Activated CD4-positive, alpha-beta memory T cell treated with anti-CD3 and anti-CD28 coated beads for 36 hours (primary cell): ENCODE measurements at regions of chr14 and their contacts with region 1.

Region 1: DNA sequence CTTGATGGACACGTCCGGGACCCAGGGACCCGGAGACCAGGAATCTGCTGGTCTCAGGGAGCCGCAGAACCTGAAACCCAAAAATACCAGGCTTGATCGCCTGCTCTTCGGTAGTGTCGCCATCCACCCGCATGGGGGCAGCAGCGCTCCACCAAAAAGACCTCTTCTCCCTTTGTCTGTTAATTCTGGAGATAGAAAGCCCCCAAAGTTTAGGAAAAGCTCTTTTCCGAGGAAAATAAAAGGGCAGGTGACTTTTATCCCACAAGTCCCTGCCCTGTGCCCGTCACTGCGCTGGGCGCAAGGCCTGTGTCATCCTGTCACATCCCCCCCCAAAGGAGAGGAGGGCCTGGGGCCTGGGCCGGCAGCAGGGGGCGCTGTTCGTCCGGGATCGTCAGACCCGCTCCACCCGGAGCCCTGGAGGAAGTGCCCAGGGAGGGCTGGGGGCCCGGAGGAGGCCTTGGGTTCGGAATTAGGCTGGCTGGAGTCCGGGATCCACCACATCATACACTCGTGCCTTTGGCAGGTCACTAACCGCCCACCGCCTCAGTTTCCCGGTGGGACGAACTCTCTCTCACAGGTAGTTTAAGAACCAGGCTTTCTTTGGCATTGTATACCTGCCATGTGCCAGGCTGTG is 31.9 kb downstream of the DAD1 start:
- DNase-seq: peak; percentile 94
- H3K4me3 Mint-ChIP-seq: peak overlapping the region; percentile 78
- H3K27ac Mint-ChIP-seq: peak overlapping the region; percentile 99
- H3K4me1 Mint-ChIP-seq: peaks cover 87% of the 10 kb centered on the region
- H3K27me3 Mint-ChIP-seq: peaks cover 4% of the 10 kb centered on the region

Region 2: GRCh38 chr14:21723431-21724045 is 833.6 kb before region 1 on chr14:
- CTCF ChIA-PET with region 1: interaction called, 4 read pairs
- POLR2A ChIA-PET with region 1: no interaction called
- intact Hi-C with region 1: loop called (anchors 5 kb)
- DNase-seq: peak; percentile 63
- H3K4me3 Mint-ChIP-seq: peak overlapping the region; percentile 69
- H3K27ac Mint-ChIP-seq: peak overlapping the region; percentile 80
- H3K4me1 Mint-ChIP-seq: peaks cover 3% of the 10 kb centered on the region
- H3K27me3 Mint-ChIP-seq: peaks cover 16% of the 10 kb centered on the region

Region 3: DNA sequence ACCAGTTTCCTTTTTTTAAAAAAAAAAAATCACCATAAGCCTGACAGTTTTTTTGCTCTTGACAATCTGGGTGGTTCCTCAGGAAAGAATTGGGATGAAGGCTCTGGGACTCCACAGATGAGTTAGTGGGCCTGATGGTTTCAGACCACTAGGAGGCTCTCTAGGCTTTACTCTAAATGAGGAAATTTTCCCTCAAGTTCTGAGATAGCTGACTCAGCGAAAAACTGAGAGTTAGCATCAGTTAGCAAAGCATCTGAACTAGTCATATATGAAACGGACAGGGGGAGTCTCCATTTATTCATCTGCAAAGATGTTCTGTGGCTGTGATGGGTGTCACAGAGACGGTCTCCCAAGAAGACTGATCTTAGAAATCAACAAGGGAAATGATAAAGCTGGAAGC is 569.2 kb before region 1 on chr14:
- CTCF ChIA-PET with region 1: interaction called, 9 read pairs
- POLR2A ChIA-PET with region 1: interaction called, 7 read pairs
- intact Hi-C with region 1: loop called (anchors 2 kb)
- DNase-seq: peak; percentile 25
- H3K4me3 Mint-ChIP-seq: no peak overlapping the region
- H3K27ac Mint-ChIP-seq: peak overlapping the region; percentile 92
- H3K4me1 Mint-ChIP-seq: peaks cover 11% of the 10 kb centered on the region
- H3K27me3 Mint-ChIP-seq: no peaks in the 10 kb centered on the region

Region 4: DNA sequence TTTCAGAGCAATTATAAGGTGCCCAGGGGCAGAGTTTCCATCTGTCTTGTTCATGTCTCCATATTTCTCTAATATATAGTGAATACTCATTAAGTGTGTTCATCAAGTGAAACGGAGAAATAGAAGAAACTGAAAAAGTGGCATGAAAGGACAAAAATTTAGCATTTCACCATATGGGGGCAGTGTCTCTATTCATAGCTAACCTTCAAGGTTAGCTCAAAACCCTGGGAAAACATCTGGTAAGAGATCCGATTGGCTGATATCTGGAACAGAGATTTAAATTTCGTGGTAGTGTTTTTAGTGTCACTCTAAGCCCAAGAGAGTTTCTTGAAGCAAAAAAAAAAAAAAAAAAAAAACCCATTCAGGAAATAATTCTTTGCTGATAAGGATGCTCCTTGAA is 335.6 kb before region 1 on chr14:
- CTCF ChIA-PET with region 1: interaction called, 4 read pairs
- POLR2A ChIA-PET with region 1: interaction called, 3 read pairs
- intact Hi-C with region 1: loop called (anchors 5 kb)
- DNase-seq: no peak
- H3K4me3 Mint-ChIP-seq: peak overlapping the region; percentile 59
- H3K27ac Mint-ChIP-seq: peak overlapping the region; percentile 56
- H3K4me1 Mint-ChIP-seq: peaks cover 10% of the 10 kb centered on the region
- H3K27me3 Mint-ChIP-seq: no peaks in the 10 kb centered on the region

Region 5: GRCh38 chr14:22519877-22520685 is 37.0 kb before region 1 on chr14:
- CTCF ChIA-PET with region 1: interaction called, 6 read pairs
- POLR2A ChIA-PET with region 1: interaction called, 102 read pairs
- intact Hi-C with region 1: no loop called
- DNase-seq: no peak
- H3K4me3 Mint-ChIP-seq: peak overlapping the region; percentile 83
- H3K27ac Mint-ChIP-seq: peak overlapping the region; percentile 99
- H3K4me1 Mint-ChIP-seq: peaks cover 88% of the 10 kb centered on the region
- H3K27me3 Mint-ChIP-seq: no peaks in the 10 kb centered on the region

Region 6: DNA sequence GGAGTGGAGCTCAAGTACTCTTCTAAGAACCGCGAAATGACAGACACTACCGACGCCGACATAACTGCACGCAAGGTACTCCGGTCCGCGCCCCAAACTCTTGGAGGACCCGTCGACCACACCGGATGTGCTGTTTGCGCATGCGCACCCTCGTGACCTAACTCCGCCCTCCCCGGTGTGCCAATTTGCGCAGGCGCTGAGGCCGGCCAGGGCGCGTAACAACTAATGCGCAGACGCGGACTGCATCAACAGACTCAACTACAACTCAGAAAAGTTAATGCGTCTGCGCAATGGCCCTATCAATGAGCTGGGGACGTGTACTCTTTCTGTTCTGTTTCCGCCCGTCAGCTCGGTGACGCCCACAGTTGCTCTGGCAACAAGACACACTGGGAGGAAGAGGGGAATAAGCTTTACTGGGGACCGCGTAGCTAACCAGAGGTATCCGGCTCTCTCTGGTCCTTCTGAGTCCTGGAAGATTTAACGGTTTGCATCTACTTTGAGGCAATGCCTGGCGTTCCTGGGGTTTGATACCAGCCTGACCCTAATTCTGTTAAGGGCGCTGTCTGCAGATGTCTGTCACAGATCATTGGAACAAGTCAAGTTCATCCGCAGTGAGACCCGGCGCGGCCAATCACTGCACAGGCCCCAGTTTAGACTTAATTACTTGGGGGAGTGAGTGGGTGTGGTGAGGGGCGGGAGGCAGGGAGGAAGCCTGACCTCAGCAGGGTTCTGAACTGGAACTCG is 32.2 kb after region 1 on chr14 and contains the start of gene DAD1:
- CTCF ChIA-PET with region 1: interaction called, 37 read pairs
- POLR2A ChIA-PET with region 1: interaction called, 42 read pairs
- intact Hi-C with region 1: loop called (anchors 1 kb)
- DNase-seq: peak; percentile 100
- H3K4me3 Mint-ChIP-seq: peak within 1 kb of the TSS; percentile 99
- H3K27ac Mint-ChIP-seq: peak within 1 kb of the TSS; percentile 100
- H3K4me1 Mint-ChIP-seq: peaks cover 64% of the 10 kb centered on the region
- H3K27me3 Mint-ChIP-seq: peaks cover 5% of the 10 kb centered on the region
- total RNA-seq, gene DAD1: 292 to 305 TPM

Region 7: DNA sequence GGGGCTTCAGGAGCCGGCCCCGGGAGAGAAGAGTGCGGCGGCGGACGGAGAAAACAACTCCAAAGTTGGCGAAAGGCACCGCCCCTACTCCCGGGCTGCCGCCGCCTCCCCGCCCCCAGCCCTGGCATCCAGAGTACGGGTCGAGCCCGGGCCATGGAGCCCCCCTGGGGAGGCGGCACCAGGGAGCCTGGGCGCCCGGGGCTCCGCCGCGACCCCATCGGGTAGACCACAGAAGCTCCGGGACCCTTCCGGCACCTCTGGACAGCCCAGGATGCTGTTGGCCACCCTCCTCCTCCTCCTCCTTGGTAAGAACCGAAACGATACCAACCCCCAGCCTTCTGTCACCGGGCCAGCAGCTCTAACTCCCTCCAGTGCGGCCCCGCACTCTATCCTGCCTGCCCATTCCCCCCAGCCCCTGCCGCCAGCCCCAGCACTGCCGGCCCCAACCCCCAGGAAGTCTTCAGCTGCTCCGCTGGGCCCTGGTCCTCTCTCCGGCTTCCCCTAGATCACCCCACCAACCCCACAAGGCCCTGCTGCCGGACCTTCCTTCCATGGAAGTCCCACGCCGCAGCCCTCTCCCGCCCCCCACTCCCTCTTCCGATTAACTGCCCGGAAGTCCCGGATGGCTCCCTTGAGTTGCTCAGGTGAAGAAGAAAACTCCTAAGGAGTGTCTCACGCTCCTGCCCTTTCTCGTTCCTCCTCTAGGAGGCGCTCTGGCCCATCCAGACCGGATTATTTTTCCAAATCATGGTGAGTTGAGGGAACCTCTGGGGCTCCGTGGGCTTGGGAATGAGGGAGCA is 315.1 kb after region 1 on chr14:
- CTCF ChIA-PET with region 1: interaction called, 11 read pairs
- POLR2A ChIA-PET with region 1: interaction called, 7 read pairs
- intact Hi-C with region 1: loop called (anchors 1 kb)
- DNase-seq: peak; percentile 84
- H3K4me3 Mint-ChIP-seq: peak overlapping the region; percentile 88
- H3K27ac Mint-ChIP-seq: peak overlapping the region; percentile 100
- H3K4me1 Mint-ChIP-seq: peaks cover 33% of the 10 kb centered on the region
- H3K27me3 Mint-ChIP-seq: no peaks in the 10 kb centered on the region